ENCODE measurements at regions of chr6 and their contacts with region 1.

Region 1: GRCh38 chr6:2738373-2738979 is 12.2 kb downstream of the MYLK4 start:
- DNase-seq: peak; percentile 43
- ATAC-seq: peak; percentile 87
- H3K4me3 ChIP-seq: no peak overlapping the region
- H3K27ac ChIP-seq: no peak overlapping the region
- H3K4me1 ChIP-seq: no peaks in the 10 kb centered on the region
- H3K27me3 ChIP-seq: no peaks in the 10 kb centered on the region
- CTCF ChIP-seq: peak; percentile 83

Region 2: GRCh38 chr6:2749969-2750600 is 11.6 kb after region 1 on chr6:
- CTCF ChIA-PET with region 1: interaction called, 12 read pairs
- POLR2A ChIA-PET with region 1: no interaction called
- in situ Hi-C with region 1: no loop called
- intact Hi-C with region 1: no loop called
- DNase-seq: no peak
- ATAC-seq: peak; percentile 70
- H3K4me3 ChIP-seq: no peak overlapping the region
- H3K27ac ChIP-seq: no peak overlapping the region
- H3K4me1 ChIP-seq: no peaks in the 10 kb centered on the region
- H3K27me3 ChIP-seq: no peaks in the 10 kb centered on the region
- CTCF ChIP-seq: peak; percentile 92